Posterior vena cava (tissue), 2 donors: ENCODE measurements at regions of chr4 and their contacts with region 1.

Region 1: GRCh38 chr4:40311811-40312346 is 23.3 kb upstream of the CHRNA9 start:
- DNase-seq: no peak

Region 2: DNA sequence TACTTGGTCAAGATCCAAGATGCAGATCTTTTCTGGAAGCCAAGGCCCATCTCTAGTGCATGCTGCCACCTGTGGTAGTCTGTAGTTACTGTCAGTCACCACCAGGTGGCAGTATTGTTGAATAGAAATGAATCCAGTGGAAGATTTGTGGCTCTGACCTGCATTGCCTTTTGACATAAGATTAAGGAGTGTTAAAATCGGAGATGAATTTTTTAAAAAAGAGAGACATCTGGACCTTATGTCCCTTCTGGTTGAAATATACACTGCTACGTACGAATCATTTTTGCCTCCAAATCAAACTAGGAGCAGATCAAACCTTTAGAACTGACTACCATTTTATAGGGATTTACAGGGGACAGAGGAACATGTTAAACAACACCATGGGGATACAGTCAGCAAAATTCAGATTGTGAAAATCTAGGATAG is 161.9 kb before region 1 on chr4:
- intact Hi-C with region 1: loop called in 1 of 2 experiments (anchors 5 kb)
- DNase-seq: no peak

Region 3: DNA sequence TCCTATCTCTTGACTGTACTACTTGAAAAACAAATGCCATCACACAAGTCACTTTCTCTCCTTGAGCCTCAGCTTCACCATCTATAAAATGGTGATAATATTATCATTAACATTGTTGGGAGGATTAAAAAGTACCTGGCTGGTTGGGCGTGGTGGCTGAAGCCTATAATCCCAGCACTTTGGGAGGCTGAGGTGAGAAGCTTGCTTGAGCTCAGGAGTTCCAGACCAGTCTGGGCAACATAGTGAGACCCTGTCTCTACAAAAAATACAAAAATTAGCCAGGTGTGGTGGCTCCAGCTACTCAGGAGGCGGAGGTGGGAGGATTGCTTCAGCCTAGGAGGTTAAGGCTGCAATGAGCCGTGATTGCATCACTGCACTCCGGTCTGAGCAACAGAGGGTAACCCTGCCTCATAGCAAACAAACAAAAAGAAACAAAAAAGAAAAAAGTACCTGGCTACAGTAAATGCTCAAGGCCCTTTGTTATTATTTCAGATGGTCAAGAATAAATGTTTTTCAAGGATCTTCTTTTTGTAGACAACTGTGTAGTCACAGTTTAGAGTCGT is 143.5 kb after region 1 on chr4:
- intact Hi-C with region 1: no loop called
- DNase-seq: no peak